IMR-90 (cell line): ENCODE measurements at regions of chr11 and their contacts with region 1.

Region 1: DNA sequence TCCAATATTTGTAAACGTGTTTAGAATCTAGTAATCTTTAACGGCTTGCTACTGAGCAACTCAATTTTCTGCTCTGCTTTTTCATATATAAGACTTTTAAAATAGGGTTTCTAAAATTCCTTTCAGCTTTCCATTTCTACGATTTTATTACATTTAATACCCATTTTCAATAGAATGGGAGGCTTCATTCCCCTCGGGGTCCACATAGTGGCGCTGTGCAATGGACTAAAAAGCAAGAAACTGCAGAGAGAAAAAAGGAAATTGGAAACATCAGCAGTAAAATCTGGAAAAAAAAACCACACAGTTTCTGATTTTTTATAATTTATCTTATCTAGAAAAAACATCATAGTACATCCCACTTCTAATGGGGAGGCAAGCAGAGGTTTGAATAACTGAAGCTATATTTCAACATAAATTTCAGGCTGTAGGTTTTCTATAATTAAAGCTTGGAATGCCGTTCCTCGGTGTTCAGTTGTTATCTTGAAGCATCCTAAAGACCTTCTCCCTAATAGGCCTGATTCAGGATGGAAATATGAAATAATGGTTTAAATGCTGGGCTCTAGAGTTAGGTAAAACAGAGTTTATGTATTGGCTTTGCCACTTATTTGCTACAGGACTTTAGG is 18.7 kb upstream of the JHY start:
- DNase-seq: peak; percentile 50
- ATAC-seq: peak; percentile 57; the same call in 1 of the 2 replicates
- H3K4me3 ChIP-seq: no peak overlapping the region
- H3K27ac ChIP-seq: no peak overlapping the region
- H3K4me1 ChIP-seq: no peaks in the 10 kb centered on the region
- H3K27me3 ChIP-seq: peaks cover 32% of the 10 kb centered on the region
- CTCF ChIP-seq: peak; percentile 96
- POLR2A ChIP-seq: no peak
- RAD21 ChIP-seq: peak; percentile 86

Region 2: DNA sequence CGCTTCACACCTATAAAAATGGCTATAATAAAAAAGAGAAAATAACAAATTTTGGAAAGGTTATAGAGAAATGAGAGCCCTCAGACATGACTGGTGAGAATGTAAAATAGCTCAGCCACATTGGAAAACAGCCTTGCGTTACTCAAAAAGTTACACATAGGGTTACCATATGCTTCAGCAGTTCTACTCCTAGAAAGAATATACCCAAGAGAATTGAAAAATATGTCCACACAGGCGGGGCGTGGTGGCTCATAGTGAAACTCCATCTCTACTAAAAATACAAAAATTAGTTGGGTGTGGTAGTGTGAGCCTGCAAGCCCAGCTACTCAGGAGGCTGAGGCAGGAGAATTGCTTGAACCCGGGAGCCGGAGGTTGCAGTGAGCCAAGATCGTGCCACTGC is 11.2 kb after region 1 on chr11:
- CTCF ChIA-PET with region 1: interaction called, 13 read pairs
- POLR2A ChIA-PET with region 1: no interaction called
- dilution Hi-C with region 1: no loop called
- in situ Hi-C with region 1: no loop called
- intact Hi-C with region 1: no loop called
- DNase-seq: no peak
- ATAC-seq: no peak
- H3K4me3 ChIP-seq: no peak overlapping the region
- H3K27ac ChIP-seq: no peak overlapping the region
- H3K4me1 ChIP-seq: no peaks in the 10 kb centered on the region
- H3K27me3 ChIP-seq: peaks cover 22% of the 10 kb centered on the region
- CTCF ChIP-seq: no peak
- POLR2A ChIP-seq: no peak
- RAD21 ChIP-seq: no peak

Region 3: GRCh38 chr11:122910775-122911174 is 47.0 kb after region 1 on chr11:
- CTCF ChIA-PET with region 1: no interaction called
- POLR2A ChIA-PET with region 1: no interaction called
- dilution Hi-C with region 1: no loop called
- in situ Hi-C with region 1: no loop called
- intact Hi-C with region 1: no loop called
- DNase-seq: peak; percentile 38
- ATAC-seq: no peak
- H3K4me3 ChIP-seq: no peak overlapping the region
- H3K27ac ChIP-seq: no peak overlapping the region
- H3K4me1 ChIP-seq: no peaks in the 10 kb centered on the region
- H3K27me3 ChIP-seq: peaks cover 12% of the 10 kb centered on the region
- CTCF ChIP-seq: peak; percentile 48
- POLR2A ChIP-seq: no peak
- RAD21 ChIP-seq: peak; percentile 62

Region 4: GRCh38 chr11:123054301-123055065 is 190.7 kb after region 1 on chr11:
- CTCF ChIA-PET with region 1: interaction called, 5 read pairs
- POLR2A ChIA-PET with region 1: no interaction called
- dilution Hi-C with region 1: loop called (anchors 25 kb)
- in situ Hi-C with region 1: no loop called
- intact Hi-C with region 1: loop called (anchors 1 kb)
- DNase-seq: peak; percentile 73
- ATAC-seq: peak; percentile 76
- H3K4me3 ChIP-seq: no peak overlapping the region
- H3K27ac ChIP-seq: no peak overlapping the region
- H3K4me1 ChIP-seq: no peaks in the 10 kb centered on the region; the same call in 1 of the 2 replicates
- H3K27me3 ChIP-seq: no peaks in the 10 kb centered on the region
- CTCF ChIP-seq: peak; percentile 66
- POLR2A ChIP-seq: peak; percentile 28
- RAD21 ChIP-seq: peak; percentile 57

Region 5: DNA sequence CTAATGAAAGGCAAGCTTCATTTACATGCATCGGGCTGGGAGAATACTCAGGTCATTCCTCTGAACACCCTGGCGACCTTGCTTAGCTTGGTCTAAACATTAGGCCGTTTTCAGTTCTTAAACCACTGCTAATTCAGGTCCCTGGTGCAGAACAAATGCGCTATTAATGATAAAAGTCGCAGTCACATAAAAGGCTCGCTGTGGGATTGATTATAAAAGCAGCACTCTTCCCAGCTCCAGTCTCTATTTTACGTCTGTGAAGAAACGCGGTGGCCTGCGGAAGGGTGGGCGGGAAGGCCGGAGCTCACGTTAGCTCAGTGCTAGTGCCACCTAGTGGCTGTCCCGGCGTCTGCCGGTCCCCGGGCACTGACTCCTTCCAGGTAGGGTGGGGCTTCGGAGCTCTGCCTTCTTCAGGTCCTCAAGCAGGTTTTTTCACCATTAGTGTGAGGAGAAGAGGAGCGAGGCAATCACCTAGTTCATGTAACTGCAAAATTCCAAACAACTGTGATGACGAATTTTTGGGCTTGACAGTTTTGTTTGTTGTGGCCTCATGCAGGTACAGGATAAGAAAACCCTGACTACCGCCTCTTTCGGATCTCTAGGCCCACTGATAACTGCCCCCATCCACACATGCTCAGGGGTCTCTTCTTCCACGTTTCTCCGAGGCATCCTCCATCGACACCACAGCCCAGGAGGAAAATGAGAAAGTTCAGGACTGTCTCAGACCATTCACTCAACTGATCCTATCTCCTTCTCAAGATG is 397.7 kb after region 1 on chr11:
- CTCF ChIA-PET with region 1: interaction called, 3 read pairs
- POLR2A ChIA-PET with region 1: no interaction called
- dilution Hi-C with region 1: no loop called
- in situ Hi-C with region 1: loop called (anchors 25 kb)
- intact Hi-C with region 1: loop called (anchors 1 kb)
- DNase-seq: peak; percentile 67
- ATAC-seq: peak; percentile 98
- H3K4me3 ChIP-seq: peak overlapping the region; percentile 31; the same call in 1 of the 2 replicates
- H3K27ac ChIP-seq: no peak overlapping the region
- H3K4me1 ChIP-seq: peaks cover 3% of the 10 kb centered on the region; the same call in 1 of the 2 replicates
- H3K27me3 ChIP-seq: peaks cover 7% of the 10 kb centered on the region; the same call in 1 of the 2 replicates
- CTCF ChIP-seq: peak; percentile 89
- POLR2A ChIP-seq: no peak
- RAD21 ChIP-seq: peak; percentile 86